ENCODE measurements at regions of chr7 and their contacts with region 1.

Region 1: GRCh38 chr7:4338556-4338955 is 343.5 kb upstream of the FOXK1 start:
- DNase-seq: no peak
- H3K4me3 ChIP-seq: no peak overlapping the region
- H3K27ac ChIP-seq: no peak overlapping the region
- H3K4me1 ChIP-seq: no peaks in the 10 kb centered on the region
- H3K27me3 ChIP-seq: no peaks in the 10 kb centered on the region
- CTCF ChIP-seq: no peak
- POLR2A ChIP-seq: no peak

Region 2: DNA sequence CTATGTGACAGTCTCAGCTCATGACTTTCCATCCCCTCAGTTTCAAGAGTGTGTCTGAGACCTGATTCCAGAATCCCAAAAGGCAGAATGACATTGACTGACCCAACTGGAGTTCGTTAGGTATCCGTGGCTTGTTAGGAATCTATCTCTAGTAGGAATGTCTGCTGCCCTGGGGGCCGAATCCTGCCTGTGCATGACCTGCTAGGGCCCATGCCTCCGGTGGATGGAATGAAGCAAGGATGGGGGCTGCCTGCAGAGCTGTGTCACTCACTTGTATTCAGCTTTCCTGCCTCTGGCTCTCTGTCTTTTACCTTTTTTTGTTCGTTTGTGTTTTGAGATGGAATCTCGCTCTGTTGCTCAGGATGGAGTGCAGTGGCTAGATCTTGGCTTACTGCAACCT is 908.0 kb before region 1 on chr7:
- intact Hi-C with region 1: loop called (anchors 5 kb)
- DNase-seq: peak in 1 of 2 donors; percentile 49
- H3K4me3 ChIP-seq: no peak overlapping the region
- H3K27ac ChIP-seq: no peak overlapping the region
- H3K4me1 ChIP-seq: no peaks in the 10 kb centered on the region
- H3K27me3 ChIP-seq: no peaks in the 10 kb centered on the region
- CTCF ChIP-seq: no peak
- POLR2A ChIP-seq: no peak

Region 3: GRCh38 chr7:3552499-3552898 is 786.1 kb before region 1 on chr7:
- intact Hi-C with region 1: no loop called
- DNase-seq: no peak
- H3K4me3 ChIP-seq: no peak overlapping the region
- H3K27ac ChIP-seq: no peak overlapping the region
- H3K4me1 ChIP-seq: no peaks in the 10 kb centered on the region
- H3K27me3 ChIP-seq: no peaks in the 10 kb centered on the region
- CTCF ChIP-seq: no peak
- POLR2A ChIP-seq: no peak